ENCODE measurements at regions of chr2 and their contacts with region 1.

Region 1: GRCh38 chr2:30711646-30712085 is 95.6 kb downstream of the CAPN13 start:
- DNase-seq: peak; percentile 72 to 92
- ATAC-seq: peak; percentile 57 to 78 (median 67)
- H3K4me3 ChIP-seq: no peak overlapping the region
- H3K27ac ChIP-seq: no peak overlapping the region
- H3K4me1 ChIP-seq: peaks cover 0 to 32% (median 8%) of the 10 kb centered on the region in 9 donors
- H3K27me3 ChIP-seq: no peaks in the 10 kb centered on the region
- CTCF ChIP-seq: peak; percentile 92 to 100 (median 99)

Region 2: DNA sequence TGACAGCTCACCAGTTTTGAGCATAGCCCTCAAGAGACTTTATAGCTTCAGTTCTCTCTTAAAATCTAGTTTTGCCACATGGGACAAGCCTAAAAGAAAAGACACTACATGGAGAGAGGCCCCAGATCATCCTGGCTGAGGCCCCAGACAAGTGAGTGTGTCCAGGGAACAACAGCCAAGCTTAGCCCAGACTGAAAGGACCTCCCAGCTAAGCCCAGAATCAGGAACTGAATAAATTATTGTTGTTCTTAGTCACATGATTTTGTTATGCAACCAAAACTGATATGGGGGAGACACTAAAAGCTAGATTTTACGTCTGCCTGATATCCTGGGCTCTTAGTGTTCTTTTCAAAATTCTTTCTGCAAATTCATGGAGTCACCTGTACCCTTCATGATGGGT is 509.7 kb before region 1 on chr2:
- intact Hi-C with region 1: loop called in 4 of 10 experiments (anchors 2 to 5 kb)
- DNase-seq: peak; percentile 28 to 44
- ATAC-seq: peak; percentile 49 to 90 (median 83)
- H3K4me3 ChIP-seq: no peak overlapping the region
- H3K27ac ChIP-seq: peak overlapping the region in 6 of 10 donors; percentile 36 to 72 (median 56)
- H3K4me1 ChIP-seq: peaks cover 0 to 29% (median 8%) of the 10 kb centered on the region in 9 donors
- H3K27me3 ChIP-seq: no peaks in the 10 kb centered on the region
- CTCF ChIP-seq: no peak

Region 3: DNA sequence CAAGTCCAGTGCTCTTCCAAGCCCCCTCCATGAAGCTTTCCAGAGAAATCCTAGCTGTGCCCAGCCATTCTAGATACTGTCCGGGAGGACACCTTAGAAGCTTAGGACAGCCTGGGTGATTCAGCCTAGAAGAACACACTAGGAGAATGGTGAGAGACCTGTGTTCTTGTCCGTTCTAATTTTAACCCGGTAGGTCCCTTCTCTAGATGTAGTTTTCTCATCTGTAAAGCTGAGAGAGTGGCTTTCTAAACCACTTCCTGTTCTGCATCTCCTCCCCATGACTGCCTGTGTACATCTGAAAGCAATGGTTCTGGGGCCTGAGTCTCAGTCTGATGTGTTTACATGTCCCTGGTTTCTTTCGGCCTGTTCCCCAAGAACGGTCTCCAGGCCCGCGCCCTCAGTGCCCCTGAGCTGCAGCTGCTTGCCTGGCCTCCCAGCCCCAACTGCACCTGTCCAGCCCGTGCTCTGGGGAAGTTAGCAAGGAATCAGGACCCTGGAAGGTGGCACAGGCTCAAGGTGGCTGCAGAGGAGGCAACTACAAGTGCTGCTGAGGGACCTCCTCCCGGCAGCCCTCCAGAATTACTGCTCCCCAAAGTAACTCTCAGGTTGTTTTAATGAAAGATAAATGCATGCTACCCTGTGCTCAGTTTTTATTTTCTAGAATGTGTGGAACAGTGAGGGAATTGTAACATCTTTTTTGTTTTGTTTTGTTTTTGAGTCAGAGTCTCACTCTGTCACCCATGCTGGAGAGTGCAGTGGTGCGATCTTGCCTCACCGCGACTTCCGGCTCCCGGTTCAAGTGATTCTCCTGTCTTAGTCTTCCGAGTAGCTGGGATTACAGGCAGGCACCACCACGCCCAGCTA is 374.5 kb before region 1 on chr2:
- intact Hi-C with region 1: loop called in 3 of 10 experiments (anchors 10 kb)
- DNase-seq: no peak
- ATAC-seq: no peak
- H3K4me3 ChIP-seq: no peak overlapping the region
- H3K27ac ChIP-seq: peak overlapping the region in 2 of 10 donors; percentile 21 to 73
- H3K4me1 ChIP-seq: peaks cover 7 to 50% (median 39%) of the 10 kb centered on the region in 9 donors
- H3K27me3 ChIP-seq: no peaks in the 10 kb centered on the region
- CTCF ChIP-seq: no peak

Region 4: GRCh38 chr2:30472326-30472725 is 239.3 kb before region 1 on chr2:
- intact Hi-C with region 1: loop called in 1 of 10 experiments (anchors 10 kb)
- DNase-seq: no peak
- ATAC-seq: no peak
- H3K4me3 ChIP-seq: no peak overlapping the region
- H3K27ac ChIP-seq: peak overlapping the region in 3 of 10 donors; percentile 7 to 36 (median 17)
- H3K4me1 ChIP-seq: peaks cover 0 to 28% (median 13%) of the 10 kb centered on the region in 9 donors
- H3K27me3 ChIP-seq: no peaks in the 10 kb centered on the region
- CTCF ChIP-seq: no peak

Region 5: GRCh38 chr2:30915486-30915885 is 203.8 kb after region 1 on chr2:
- intact Hi-C with region 1: loop called in 1 of 10 experiments (anchors 2 kb)
- DNase-seq: peak; percentile 27
- ATAC-seq: peak in 6 of 8 donors; percentile 17 to 83 (median 52)
- H3K4me3 ChIP-seq: no peak overlapping the region
- H3K27ac ChIP-seq: no peak overlapping the region
- H3K4me1 ChIP-seq: peaks cover 0 to 2% (median 0%) of the 10 kb centered on the region in 9 donors
- H3K27me3 ChIP-seq: no peaks in the 10 kb centered on the region
- CTCF ChIP-seq: peak; percentile 6 to 49 (median 37)

Region 6: DNA sequence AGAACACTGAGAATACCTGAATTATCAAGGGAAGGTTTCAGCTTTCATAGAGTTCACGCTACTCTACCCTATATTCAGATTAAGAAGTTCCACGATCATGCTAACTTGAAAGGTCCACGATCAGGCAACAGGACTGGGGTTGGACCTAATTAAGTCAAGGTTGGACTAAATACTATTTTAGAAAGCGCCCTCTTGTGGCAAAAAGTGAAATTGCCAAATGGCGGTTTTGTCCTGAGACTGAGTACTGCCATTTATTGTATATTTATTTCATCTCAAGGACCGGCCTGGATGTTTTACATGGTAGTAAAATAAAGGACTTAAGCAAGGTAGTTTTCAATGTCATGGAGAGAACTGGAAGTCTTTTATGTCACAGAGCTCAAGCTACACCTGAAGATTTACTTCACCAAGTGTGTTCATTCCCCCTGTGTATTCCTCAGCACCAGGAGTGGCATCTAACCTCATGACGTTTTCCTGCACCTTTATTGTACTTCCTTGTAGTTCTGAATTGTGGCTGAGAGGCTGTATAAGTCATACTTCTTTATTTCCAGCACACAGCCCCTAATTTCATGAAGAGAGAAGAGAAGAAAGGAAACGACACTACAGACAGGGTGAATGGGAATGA is 812.3 kb after region 1 on chr2:
- intact Hi-C with region 1: loop called in 9 of 10 experiments (anchors 5 to 10 kb)
- DNase-seq: peak in 1 of 2 donors; percentile 23
- ATAC-seq: no peak
- H3K4me3 ChIP-seq: no peak overlapping the region
- H3K27ac ChIP-seq: no peak overlapping the region
- H3K4me1 ChIP-seq: no peaks in the 10 kb centered on the region
- H3K27me3 ChIP-seq: peaks cover 0 to 22% (median 0%) of the 10 kb centered on the region in 7 donors
- CTCF ChIP-seq: peak; percentile 31 to 82 (median 69)

Measured in heart right ventricle (tissue), 16 donors.